B cell (primary cell): ENCODE measurements at regions of chr17 and their contacts with region 1.

Region 1: GRCh38 chr17:65198653-65199382 is 61.6 kb downstream of the RGS9 start:
- DNase-seq: peak; percentile 73
- ATAC-seq: peak; percentile 53
- H3K4me3 ChIP-seq: no peak overlapping the region
- H3K4me3 Mint-ChIP-seq: no peak overlapping the region
- H3K27ac ChIP-seq: no peak overlapping the region
- H3K27ac Mint-ChIP-seq: no peak overlapping the region
- H3K4me1 ChIP-seq: no peaks in the 10 kb centered on the region
- H3K4me1 Mint-ChIP-seq: peaks cover 2% of the 10 kb centered on the region
- H3K27me3 ChIP-seq: no peaks in the 10 kb centered on the region
- H3K27me3 Mint-ChIP-seq: no peaks in the 10 kb centered on the region
- CTCF ChIP-seq: peak; percentile 89

Region 2: DNA sequence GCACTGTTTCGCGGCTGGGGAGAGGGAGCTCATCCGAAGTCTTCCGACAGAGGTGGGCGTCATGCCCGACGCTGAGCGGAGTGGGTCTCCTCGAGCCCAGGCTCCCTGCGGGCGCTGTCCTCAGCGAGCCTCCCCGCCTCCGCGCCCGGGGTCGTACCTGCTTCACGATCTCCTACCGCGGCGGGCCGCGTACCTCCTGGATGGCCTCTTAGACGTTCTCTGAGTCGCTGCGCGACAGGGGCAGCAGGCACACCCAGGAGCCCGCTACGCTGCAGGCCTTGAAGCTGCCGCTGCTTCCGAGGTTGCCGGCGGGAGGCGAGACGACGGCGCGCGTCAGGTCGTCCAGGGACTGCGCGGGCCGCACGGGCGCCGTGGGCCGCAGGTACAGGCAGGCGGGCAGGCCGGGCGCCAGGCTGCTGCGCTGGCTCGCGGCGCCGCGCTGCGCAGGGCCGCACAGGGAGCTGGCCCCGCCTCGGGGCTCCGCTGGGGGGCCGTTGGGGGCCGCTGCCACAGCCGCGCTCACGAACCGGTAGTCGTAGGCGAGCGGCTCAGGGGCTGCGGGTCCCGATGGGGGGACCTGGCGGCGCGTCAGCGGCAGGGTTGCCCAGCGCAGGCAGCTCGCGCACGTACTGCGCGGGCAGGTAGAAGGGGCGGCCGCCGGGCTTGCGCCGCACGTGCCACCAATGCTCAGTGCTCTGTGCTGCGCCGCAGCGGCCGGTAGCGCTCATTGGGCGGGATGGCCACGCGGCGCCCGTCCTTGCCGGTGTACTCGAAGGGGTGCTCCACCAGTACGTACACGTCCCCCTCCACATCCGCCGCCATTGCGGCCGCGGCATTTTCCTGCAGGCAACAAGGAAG is 420.3 kb before region 1 on chr17:
- CTCF ChIA-PET with region 1: interaction called, 5 read pairs
- POLR2A ChIA-PET with region 1: no interaction called
- intact Hi-C with region 1: loop called (anchors 1 kb)
- DNase-seq: peak; percentile 61
- ATAC-seq: peak; percentile 14
- H3K4me3 ChIP-seq: peak overlapping the region; percentile 12 to 55 (median 51)
- H3K4me3 Mint-ChIP-seq: peak overlapping the region; percentile 94
- H3K27ac ChIP-seq: no peak overlapping the region
- H3K27ac Mint-ChIP-seq: peak overlapping the region; percentile 76
- H3K4me1 ChIP-seq: peaks cover 37 to 56% of the 10 kb centered on the region in 2 donors
- H3K4me1 Mint-ChIP-seq: peaks cover 45% of the 10 kb centered on the region
- H3K27me3 ChIP-seq: peaks cover 0 to 32% (median 10%) of the 10 kb centered on the region in 4 experiments
- H3K27me3 Mint-ChIP-seq: peaks cover 3% of the 10 kb centered on the region
- CTCF ChIP-seq: no peak

Region 3: GRCh38 chr17:65231662-65232335 is 33.0 kb after region 1 on chr17:
- CTCF ChIA-PET with region 1: no interaction called
- POLR2A ChIA-PET with region 1: no interaction called
- intact Hi-C with region 1: no loop called
- DNase-seq: peak; percentile 31
- ATAC-seq: no peak
- H3K4me3 ChIP-seq: no peak overlapping the region
- H3K4me3 Mint-ChIP-seq: no peak overlapping the region
- H3K27ac ChIP-seq: no peak overlapping the region
- H3K27ac Mint-ChIP-seq: no peak overlapping the region
- H3K4me1 ChIP-seq: peaks cover 4 to 9% of the 10 kb centered on the region in 2 donors
- H3K4me1 Mint-ChIP-seq: peaks cover 8% of the 10 kb centered on the region
- H3K27me3 ChIP-seq: peaks cover 0 to 24% (median 5%) of the 10 kb centered on the region in 4 experiments
- H3K27me3 Mint-ChIP-seq: peaks cover 37% of the 10 kb centered on the region
- CTCF ChIP-seq: peak; percentile 25

Region 4: DNA sequence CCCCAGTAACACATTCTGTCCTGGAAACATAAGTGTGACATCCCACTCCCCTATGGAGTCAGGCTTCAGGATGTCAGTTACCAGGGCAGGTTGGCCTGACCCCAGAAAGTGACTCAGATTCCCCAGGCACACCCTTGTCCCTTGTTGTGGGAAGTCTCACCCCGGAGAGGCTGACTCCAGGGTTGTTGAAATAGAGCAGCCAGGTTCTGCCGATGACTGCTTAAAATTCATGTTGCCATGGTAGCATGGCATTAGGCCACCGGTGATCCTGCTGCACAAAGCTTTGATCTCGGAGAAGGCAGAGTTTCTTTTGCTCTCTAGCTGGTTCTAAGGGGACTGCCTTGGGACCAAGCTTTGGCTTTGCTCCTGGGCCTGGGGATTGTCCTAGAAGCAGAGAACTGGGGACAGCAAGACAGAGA is 45.0 kb after region 1 on chr17:
- CTCF ChIA-PET with region 1: no interaction called
- POLR2A ChIA-PET with region 1: no interaction called
- intact Hi-C with region 1: no loop called
- DNase-seq: no peak
- ATAC-seq: no peak
- H3K4me3 ChIP-seq: no peak overlapping the region
- H3K4me3 Mint-ChIP-seq: no peak overlapping the region
- H3K27ac ChIP-seq: no peak overlapping the region
- H3K27ac Mint-ChIP-seq: no peak overlapping the region
- H3K4me1 ChIP-seq: no peaks in the 10 kb centered on the region
- H3K4me1 Mint-ChIP-seq: no peaks in the 10 kb centered on the region
- H3K27me3 ChIP-seq: peaks cover 0 to 15% (median 0%) of the 10 kb centered on the region in 4 experiments
- H3K27me3 Mint-ChIP-seq: peaks cover 42% of the 10 kb centered on the region
- CTCF ChIP-seq: no peak